WTC11 (cell line): ENCODE measurements at regions of chr3 and their contacts with region 1.

Region 1: GRCh38 chr3:42880601-42881451 is 5.1 kb upstream of the CYP8B1 start:
- DNase-seq: peak; percentile 91
- ATAC-seq: peak; percentile 97
- H3K4me3 Mint-ChIP-seq: peak overlapping the region; percentile 85
- H3K27ac Mint-ChIP-seq: 0 out of 2 replicates have a peak overlapping the region, but pooled peaks have one; percentile 77
- H3K4me1 Mint-ChIP-seq: peaks cover 25% of the 10 kb centered on the region
- H3K27me3 Mint-ChIP-seq: peaks cover 7% of the 10 kb centered on the region
- CTCF ChIP-seq: peak; percentile 57; the same call in 1 of the 2 replicates

Region 2: DNA sequence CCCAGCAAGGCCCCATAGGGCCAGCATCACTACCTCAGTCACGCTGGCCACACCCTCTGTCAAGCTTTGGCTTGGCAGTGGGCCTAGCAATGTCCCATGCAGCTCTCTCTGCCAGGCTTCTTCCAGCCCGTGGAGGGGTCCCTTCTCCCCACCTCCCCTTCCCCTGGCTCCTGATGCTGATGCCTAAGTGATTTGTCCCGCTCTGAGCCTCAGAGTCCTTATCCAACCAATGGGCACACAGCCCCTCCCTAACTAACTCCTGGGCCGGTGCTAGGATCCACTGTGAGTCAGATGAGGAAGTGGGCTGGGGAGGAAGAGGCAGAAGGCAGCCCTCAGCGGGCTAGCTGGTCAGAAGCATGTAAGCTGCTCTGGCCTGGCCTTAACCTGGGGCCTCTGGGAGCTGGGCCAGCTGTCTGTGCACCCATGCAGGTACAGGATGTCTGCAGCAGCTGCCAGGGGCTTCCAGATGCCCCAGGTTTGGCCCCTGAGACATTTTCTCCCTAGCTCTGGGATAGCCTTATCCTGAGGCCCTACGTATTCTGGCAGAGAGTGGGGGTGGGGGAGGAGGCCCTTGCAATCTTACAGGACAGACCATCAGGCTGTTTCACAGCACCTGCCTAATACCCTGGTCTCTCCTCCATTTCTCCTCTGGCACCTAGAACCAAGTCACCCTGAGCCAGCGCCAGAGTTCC is 228.1 kb before region 1 on chr3:
- CTCF ChIA-PET with region 1: interaction called, 10 read pairs
- POLR2A ChIA-PET with region 1: no interaction called
- DNase-seq: no peak
- ATAC-seq: peak; percentile 2
- H3K4me3 Mint-ChIP-seq: peak overlapping the region; percentile 87
- H3K27ac Mint-ChIP-seq: 0 out of 2 replicates have a peak overlapping the region, but pooled peaks have one; percentile 12
- H3K4me1 Mint-ChIP-seq: peaks cover 47% of the 10 kb centered on the region
- H3K27me3 Mint-ChIP-seq: no peaks in the 10 kb centered on the region
- CTCF ChIP-seq: no peak

Region 3: GRCh38 chr3:42839616-42840015 is 41.2 kb before region 1 on chr3:
- CTCF ChIA-PET with region 1: interaction called, 29 read pairs
- POLR2A ChIA-PET with region 1: interaction called, 3 read pairs
- DNase-seq: peak; percentile 21
- ATAC-seq: peak; percentile 95
- H3K4me3 Mint-ChIP-seq: no peak overlapping the region
- H3K27ac Mint-ChIP-seq: no peak overlapping the region
- H3K4me1 Mint-ChIP-seq: peaks cover 9% of the 10 kb centered on the region
- H3K27me3 Mint-ChIP-seq: no peaks in the 10 kb centered on the region
- CTCF ChIP-seq: peak; percentile 28; the same call in 1 of the 2 replicates

Region 4: DNA sequence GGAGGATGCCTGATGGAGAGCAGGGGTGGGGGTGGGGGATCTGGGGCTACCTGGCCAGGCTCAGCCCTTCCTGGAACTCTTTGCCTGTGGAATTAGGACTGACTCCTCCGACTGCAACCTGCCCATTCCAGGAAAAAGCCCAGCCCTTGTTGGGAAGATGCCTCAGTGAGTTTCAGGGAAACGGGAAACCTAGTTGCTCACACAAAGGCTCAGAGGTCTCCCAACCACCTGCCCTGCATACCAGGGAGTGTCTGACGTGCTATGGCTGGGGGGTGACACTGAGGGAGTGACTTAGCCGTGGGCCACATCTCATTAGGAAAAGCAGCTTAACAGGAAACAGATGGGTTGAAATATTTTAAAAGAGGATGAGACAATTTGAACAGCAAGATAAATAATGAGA is 33.1 kb before region 1 on chr3:
- CTCF ChIA-PET with region 1: interaction called, 10 read pairs
- POLR2A ChIA-PET with region 1: no interaction called
- DNase-seq: peak; percentile 14
- ATAC-seq: peak; percentile 55
- H3K4me3 Mint-ChIP-seq: no peak overlapping the region
- H3K27ac Mint-ChIP-seq: no peak overlapping the region
- H3K4me1 Mint-ChIP-seq: peaks cover 14% of the 10 kb centered on the region
- H3K27me3 Mint-ChIP-seq: no peaks in the 10 kb centered on the region
- CTCF ChIP-seq: no peak

Region 5: GRCh38 chr3:42891042-42891441 is 10.2 kb after region 1 on chr3:
- CTCF ChIA-PET with region 1: interaction called, 20 read pairs
- POLR2A ChIA-PET with region 1: no interaction called
- DNase-seq: no peak
- ATAC-seq: peak; percentile 93
- H3K4me3 Mint-ChIP-seq: no peak overlapping the region
- H3K27ac Mint-ChIP-seq: peak overlapping the region; percentile 98
- H3K4me1 Mint-ChIP-seq: peaks cover 57% of the 10 kb centered on the region
- H3K27me3 Mint-ChIP-seq: no peaks in the 10 kb centered on the region
- CTCF ChIP-seq: no peak

Region 6: GRCh38 chr3:42975456-42975855 is 94.6 kb after region 1 on chr3:
- CTCF ChIA-PET with region 1: no interaction called
- POLR2A ChIA-PET with region 1: no interaction called
- DNase-seq: no peak
- ATAC-seq: no peak
- H3K4me3 Mint-ChIP-seq: no peak overlapping the region
- H3K27ac Mint-ChIP-seq: no peak overlapping the region
- H3K4me1 Mint-ChIP-seq: peaks cover 11% of the 10 kb centered on the region
- H3K27me3 Mint-ChIP-seq: peaks cover 49% of the 10 kb centered on the region
- CTCF ChIP-seq: no peak

Region 7: GRCh38 chr3:43055806-43056770 is 175.3 kb after region 1 on chr3:
- CTCF ChIA-PET with region 1: no interaction called
- POLR2A ChIA-PET with region 1: no interaction called
- DNase-seq: no peak
- ATAC-seq: no peak
- H3K4me3 Mint-ChIP-seq: no peak overlapping the region
- H3K27ac Mint-ChIP-seq: no peak overlapping the region
- H3K4me1 Mint-ChIP-seq: no peaks in the 10 kb centered on the region
- H3K27me3 Mint-ChIP-seq: peaks cover 2% of the 10 kb centered on the region; the same call in 1 of the 2 replicates
- CTCF ChIP-seq: no peak

Region 8: DNA sequence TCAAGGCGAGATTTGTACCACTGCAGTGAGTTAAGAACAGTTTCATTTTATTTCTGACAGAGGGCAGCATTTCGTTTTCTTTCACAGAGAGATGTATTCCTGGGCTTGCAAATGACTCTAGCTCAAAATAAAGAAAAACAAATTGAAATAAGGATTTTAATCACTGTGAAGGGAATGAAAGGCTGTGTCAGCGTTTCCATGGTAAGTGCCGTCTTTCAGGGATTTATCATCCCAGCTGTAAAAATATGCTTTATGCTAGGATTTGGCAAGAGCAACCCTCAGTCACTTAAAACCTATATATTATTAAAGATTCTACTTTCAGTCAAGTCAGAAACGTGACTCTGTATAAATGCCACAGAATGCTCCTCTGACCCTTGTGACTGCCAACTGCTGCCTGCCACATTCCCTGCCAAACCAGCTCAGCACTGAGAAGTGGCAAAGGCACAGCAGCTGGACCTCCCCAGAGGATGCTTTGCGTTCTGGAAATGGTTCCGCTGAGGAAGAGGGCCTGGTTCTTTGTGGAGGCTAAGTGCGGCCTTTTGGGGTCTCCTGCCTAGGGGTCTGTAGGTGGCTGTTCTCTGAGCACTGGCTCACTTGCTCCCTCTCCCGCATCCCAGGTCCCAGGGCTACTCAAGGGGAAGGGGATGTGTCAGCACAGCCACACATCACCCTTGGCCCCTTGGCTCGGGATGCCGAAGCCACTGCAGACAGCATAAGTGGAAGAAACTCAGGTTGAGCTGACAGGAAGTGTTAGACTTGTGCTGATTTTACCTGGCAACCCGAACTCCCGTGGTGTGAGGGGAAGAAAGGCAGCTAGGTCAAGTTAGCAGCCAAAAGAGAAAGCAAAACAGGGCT is 281.6 kb after region 1 on chr3:
- CTCF ChIA-PET with region 1: no interaction called
- POLR2A ChIA-PET with region 1: no interaction called
- DNase-seq: peak; percentile 13
- ATAC-seq: peak; percentile 42
- H3K4me3 Mint-ChIP-seq: no peak overlapping the region
- H3K27ac Mint-ChIP-seq: peak overlapping the region; percentile 70
- H3K4me1 Mint-ChIP-seq: peaks cover 21% of the 10 kb centered on the region
- H3K27me3 Mint-ChIP-seq: peaks cover 4% of the 10 kb centered on the region; the same call in 1 of the 2 replicates
- CTCF ChIP-seq: no peak